H1 (cell line): ENCODE measurements at regions of chrX and their contacts with region 1.

Region 1: DNA sequence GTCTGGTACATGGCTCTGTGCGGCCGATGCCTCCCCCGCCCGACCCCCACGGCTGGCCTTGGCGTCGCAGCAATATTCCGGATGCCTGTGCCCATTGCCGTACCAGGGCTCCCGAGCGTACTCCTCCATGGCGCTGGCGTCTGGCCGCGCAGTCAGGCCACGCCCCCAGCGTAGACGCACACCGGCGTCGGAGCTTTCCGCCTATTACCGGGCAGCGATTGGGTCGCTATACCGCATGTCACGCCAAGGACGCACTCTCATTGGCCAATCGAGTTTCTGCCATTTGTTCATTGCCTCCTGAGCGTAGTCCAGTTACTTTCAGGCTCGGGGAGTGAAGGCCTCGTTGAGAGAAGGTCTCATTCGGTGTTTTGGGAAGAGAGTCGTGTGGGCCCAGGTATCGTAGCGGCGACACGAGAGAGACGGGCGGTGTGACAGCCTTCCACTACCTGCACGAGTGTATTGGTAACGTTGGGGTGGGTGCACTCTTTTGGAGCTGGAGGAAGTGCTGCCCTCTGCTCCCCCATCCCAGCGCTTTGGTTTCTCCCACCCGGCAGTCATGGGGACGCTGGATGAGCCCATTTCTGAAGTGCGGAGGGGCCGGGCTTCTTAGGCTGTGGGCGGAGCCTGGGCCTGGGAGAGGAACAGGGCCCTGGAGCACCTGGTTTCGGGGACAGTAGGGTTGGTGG is at the starts of genes PQBP1 and TIMM17B:
- DNase-seq: peak; percentile 77 to 79
- H3K4me3 ChIP-seq: peak within 1 kb of the TSS; percentile 78 to 94 (median 82)
- H3K27ac ChIP-seq: peak within 1 kb of the TSS; percentile 95
- H3K4me1 ChIP-seq: peaks cover 0 to 3% (median 2%) of the 10 kb centered on the region in 4 experiments; a peak in 3 of 7 replicates
- H3K27me3 ChIP-seq: no peaks in the 10 kb centered on the region
- CTCF ChIP-seq: no peak
- EP300 ChIP-seq: peak in 1 of 2 experiments; percentile 98; a peak in 2 of 3 replicates
- POLR2A ChIP-seq: peak in 1 of 2 experiments; percentile 67; a peak in 1 of 3 replicates
- RAD21 ChIP-seq: no peak
- total RNA-seq, gene PQBP1: 95.9 and 101 TPM in 2 replicates
- total RNA-seq, gene TIMM17B: 77.8 and 82.4 TPM in 2 replicates

Region 2: GRCh38 chrX:48911412-48912182 is 13.8 kb after region 1 on chrX and contains the start of gene SLC35A2:
- CTCF ChIA-PET with region 1: interaction called, 4 read pairs
- POLR2A ChIA-PET with region 1: interaction called, 49 read pairs
- DNase-seq: peak in 1 of 2 experiments; percentile 85
- H3K4me3 ChIP-seq: peak within 1 kb of the TSS; percentile 62 to 94 (median 80)
- H3K27ac ChIP-seq: peak within 1 kb of the TSS; percentile 75; the same call in 1 of the 2 replicates
- H3K4me1 ChIP-seq: peaks cover 0 to 4% (median 3%) of the 10 kb centered on the region in 4 experiments; a peak in 5 of 7 replicates
- H3K27me3 ChIP-seq: no peaks in the 10 kb centered on the region
- CTCF ChIP-seq: no peak
- EP300 ChIP-seq: no peak
- POLR2A ChIP-seq: no peak
- RAD21 ChIP-seq: no peak
- total RNA-seq, gene SLC35A2: 20.4 and 21.4 TPM in 2 replicates

Region 3: GRCh38 chrX:48917139-48918001 is 19.6 kb after region 1 on chrX:
- CTCF ChIA-PET with region 1: no interaction called
- POLR2A ChIA-PET with region 1: interaction called, 49 read pairs
- DNase-seq: peak; percentile 68 to 80
- H3K4me3 ChIP-seq: peak overlapping the region; percentile 72 to 96 (median 88)
- H3K27ac ChIP-seq: peak overlapping the region; percentile 58; the same call in 1 of the 2 replicates
- H3K4me1 ChIP-seq: peaks cover 8 to 15% (median 14%) of the 10 kb centered on the region in 4 experiments
- H3K27me3 ChIP-seq: no peaks in the 10 kb centered on the region
- CTCF ChIP-seq: peak in 2 of 3 experiments; percentile 74 to 82; a peak in 3 of 4 replicates
- EP300 ChIP-seq: no peak
- POLR2A ChIP-seq: peak in 1 of 2 experiments; percentile 16; a peak in 1 of 3 replicates
- RAD21 ChIP-seq: peak; percentile 40 to 54; a peak in 3 of 4 replicates

Region 4: DNA sequence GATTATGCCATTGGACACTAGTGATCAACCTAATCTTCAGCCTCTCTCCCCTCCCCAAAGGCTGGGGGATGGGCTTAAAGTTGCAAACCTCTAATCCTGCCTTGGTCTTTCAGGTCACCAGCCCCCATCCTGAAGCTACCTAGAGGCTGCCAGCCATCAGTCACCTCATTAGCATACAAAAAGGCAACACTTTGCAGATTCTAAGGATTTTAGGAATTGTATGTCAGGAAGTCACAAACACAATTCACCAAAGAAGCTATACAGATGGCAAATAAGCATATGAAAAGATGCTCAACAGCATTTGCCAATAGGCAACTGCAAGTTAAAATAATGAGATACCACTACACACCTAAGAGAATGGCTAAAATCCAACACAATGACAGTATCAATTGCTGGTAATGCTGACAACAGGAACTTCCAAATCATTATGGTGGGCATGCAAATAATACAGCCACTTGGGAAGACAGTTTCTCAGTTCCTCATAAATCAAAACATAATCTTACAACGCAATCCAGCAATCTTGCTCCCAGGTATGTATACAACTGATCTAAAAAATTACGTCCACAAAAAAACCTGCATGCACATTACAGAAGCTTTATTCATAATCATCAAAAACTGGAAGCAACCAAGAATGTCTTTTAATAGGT is 30.1 kb after region 1 on chrX:
- CTCF ChIA-PET with region 1: interaction called, 3 read pairs
- POLR2A ChIA-PET with region 1: interaction called, 572 read pairs
- DNase-seq: no peak
- H3K4me3 ChIP-seq: peak overlapping the region; percentile 2 to 54 (median 14); a peak in 5 of 8 replicates
- H3K27ac ChIP-seq: peak overlapping the region; percentile 75
- H3K4me1 ChIP-seq: peaks cover 0 to 18% (median 8%) of the 10 kb centered on the region in 4 experiments; a peak in 5 of 7 replicates
- H3K27me3 ChIP-seq: no peaks in the 10 kb centered on the region
- CTCF ChIP-seq: no peak
- EP300 ChIP-seq: peak in 1 of 2 experiments; percentile 7; a peak in 1 of 3 replicates
- POLR2A ChIP-seq: no peak
- RAD21 ChIP-seq: no peak

Region 5: DNA sequence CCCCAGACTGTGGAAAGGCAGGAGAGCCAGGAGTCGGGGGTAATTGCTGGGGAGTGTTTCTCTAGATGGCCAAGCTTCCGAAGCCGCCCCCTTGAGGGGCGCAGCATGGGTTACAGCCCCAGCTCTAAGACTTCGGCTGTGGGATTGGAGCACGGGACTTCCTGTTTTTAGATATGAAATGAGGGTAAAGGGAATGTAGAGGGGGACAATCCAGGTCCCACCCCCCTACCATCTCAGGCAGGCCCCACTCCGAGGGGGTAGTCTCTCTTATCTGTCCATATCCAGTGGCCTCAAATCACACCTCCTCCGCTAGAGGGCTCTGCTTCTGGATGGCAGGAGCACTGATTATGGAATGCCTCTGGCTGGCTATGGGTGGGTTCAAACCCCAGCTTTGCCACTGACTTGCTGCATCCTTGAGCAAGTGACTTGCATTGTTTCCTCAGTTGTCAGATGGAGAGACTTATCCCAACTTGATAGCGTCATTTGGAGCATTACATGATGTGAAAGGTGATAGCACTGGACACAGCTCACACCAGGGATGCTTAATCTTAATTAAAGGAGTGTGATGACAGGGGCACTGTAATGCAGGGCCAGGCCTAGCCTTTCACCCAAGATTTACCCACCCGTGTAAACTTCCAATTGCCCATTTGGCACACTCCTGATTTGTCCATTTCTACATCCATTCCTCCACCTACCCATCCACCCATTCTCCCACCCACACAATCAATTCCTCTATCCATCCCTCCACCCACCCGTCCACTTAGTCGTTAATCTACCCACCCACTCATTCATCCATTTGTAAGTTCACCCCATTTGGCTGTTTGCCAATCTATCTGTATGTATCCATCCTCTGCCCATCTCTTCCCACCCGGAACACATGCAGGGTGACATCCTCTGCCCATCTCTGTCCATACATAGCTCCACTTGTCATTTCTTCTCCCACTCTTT is 74.7 kb after region 1 on chrX:
- CTCF ChIA-PET with region 1: interaction called, 3 read pairs
- POLR2A ChIA-PET with region 1: interaction called, 10 read pairs
- DNase-seq: peak in 1 of 2 experiments; percentile 54
- H3K4me3 ChIP-seq: peak overlapping the region; percentile 39 to 70 (median 50)
- H3K27ac ChIP-seq: no peak overlapping the region; the same call in 1 of the 2 replicates
- H3K4me1 ChIP-seq: peaks cover 0 to 3% (median 0%) of the 10 kb centered on the region in 4 experiments; a peak in 1 of 7 replicates
- H3K27me3 ChIP-seq: no peaks in the 10 kb centered on the region
- CTCF ChIP-seq: peak in 2 of 3 experiments; percentile 39 to 70; a peak in 3 of 4 replicates
- EP300 ChIP-seq: no peak
- POLR2A ChIP-seq: peak in 1 of 2 experiments; percentile 59; a peak in 2 of 3 replicates
- RAD21 ChIP-seq: peak in 1 of 2 experiments; percentile 22; a peak in 1 of 4 replicates